Activated T-helper 1 cell treated with anti-CD3 and anti-CD28 coated beads, Interleukin-12 subunit alpha, Interleukin-12 subunit beta, Interleukin-2, Interleukin-4 antibody, amounts not matched to agents 30 ng/mL and 10 ng/mL and 1 ng/mL, durations not matched to agents 14 hours and 24 hours and 36 hours (primary cell): ENCODE measurements at regions of chr5 and their contacts with region 1.

Region 1: DNA sequence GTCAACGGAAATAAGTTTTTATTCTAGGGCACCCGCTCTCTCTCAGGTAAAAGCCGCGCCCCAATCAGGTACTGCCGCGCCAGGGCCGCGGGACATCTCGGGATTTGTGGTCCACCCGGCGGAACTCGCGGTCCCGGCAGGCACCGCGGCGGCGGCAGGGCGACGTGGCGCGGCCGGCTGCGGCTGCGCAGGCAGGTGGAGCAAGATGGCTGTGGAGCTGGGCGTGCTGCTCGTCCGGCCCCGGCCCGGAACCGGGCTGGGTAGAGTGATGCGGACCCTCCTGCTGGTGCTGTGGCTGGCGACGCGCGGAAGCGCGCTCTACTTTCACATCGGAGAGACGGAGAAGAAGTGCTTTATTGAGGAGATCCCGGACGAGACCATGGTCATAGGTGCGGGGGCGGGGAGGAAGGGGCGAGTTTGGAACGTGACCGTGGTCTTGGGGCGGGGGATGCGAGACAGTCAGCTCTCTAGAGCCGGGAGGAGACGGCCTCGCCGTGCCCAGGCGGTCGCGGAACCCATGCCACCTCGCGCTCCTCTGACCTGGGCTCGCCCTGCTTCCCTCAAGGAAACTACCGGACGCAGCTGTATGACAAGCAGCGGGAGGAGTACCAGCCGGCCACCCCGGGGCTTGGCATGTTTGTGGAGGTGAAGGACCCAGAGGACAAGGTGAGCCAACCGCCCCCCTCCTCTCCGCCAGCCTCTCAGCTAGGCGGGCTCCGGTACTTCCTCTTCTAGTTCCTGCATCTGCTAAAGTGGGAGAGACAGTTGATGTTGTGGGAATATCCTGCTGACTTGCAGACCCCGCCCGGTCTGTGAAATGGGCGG is at the start of gene TMED9:
- DNase-seq: peak; percentile 90
- H3K4me3 Mint-ChIP-seq: peak within 1 kb of the TSS; percentile 99
- H3K27ac Mint-ChIP-seq: peak within 1 kb of the TSS; percentile 100
- H3K4me1 Mint-ChIP-seq: peaks cover 29% of the 10 kb centered on the region
- H3K27me3 Mint-ChIP-seq: peaks cover 20% of the 10 kb centered on the region
- total RNA-seq, gene TMED9: 174 and 175 TPM in 2 replicates

Region 2: DNA sequence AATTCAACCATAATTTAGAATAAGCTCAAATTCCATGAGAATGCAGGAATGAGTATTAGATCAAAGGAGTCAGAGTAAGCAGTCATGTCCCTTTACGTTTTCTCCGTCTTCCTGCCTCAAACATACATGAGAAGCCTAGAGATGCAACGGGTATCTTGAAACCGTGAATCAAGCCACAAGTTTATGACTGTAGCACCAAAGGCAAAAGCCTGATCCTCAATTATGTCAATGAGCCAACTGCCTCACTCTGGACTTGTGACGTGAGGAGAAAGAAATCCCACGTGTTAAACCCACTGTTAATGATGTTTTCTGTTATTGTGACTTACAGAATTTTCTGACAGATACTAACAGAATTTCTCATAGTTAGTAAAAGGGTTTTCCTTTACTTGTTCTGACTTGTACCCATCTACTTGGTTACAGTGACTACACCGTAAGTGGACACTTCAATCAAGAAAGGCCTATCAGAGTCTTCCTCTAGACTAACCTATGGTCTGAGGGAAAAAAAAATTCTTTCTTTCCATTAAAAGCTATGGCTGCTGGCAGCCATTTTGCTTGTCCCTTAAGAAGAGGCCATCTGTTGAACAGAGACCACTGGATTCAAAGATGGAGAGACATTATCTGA is 657.8 kb before region 1 on chr5:
- intact Hi-C with region 1: no loop called
- DNase-seq: no peak
- H3K4me3 Mint-ChIP-seq: no peak overlapping the region
- H3K27ac Mint-ChIP-seq: no peak overlapping the region
- H3K4me1 Mint-ChIP-seq: peaks cover 9% of the 10 kb centered on the region
- H3K27me3 Mint-ChIP-seq: no peaks in the 10 kb centered on the region

Region 3: GRCh38 chr5:177133091-177133852 is 458.9 kb before region 1 on chr5 and contains the start of gene NSD1:
- intact Hi-C with region 1: loop called (anchors 5 kb)
- DNase-seq: peak; percentile 90
- H3K4me3 Mint-ChIP-seq: peak within 1 kb of the TSS; percentile 93
- H3K27ac Mint-ChIP-seq: peak within 1 kb of the TSS; percentile 86
- H3K4me1 Mint-ChIP-seq: peaks cover 48% of the 10 kb centered on the region
- H3K27me3 Mint-ChIP-seq: no peaks in the 10 kb centered on the region
- total RNA-seq, gene NSD1: 108 and 112 TPM in 2 replicates

Region 4: GRCh38 chr5:177403792-177404640 is 188.2 kb before region 1 on chr5:
- intact Hi-C with region 1: loop called (anchors 2 kb)
- DNase-seq: peak; percentile 75
- H3K4me3 Mint-ChIP-seq: peak overlapping the region; percentile 84
- H3K27ac Mint-ChIP-seq: no peak overlapping the region
- H3K4me1 Mint-ChIP-seq: peaks cover 17% of the 10 kb centered on the region
- H3K27me3 Mint-ChIP-seq: peaks cover 34% of the 10 kb centered on the region

Region 5: DNA sequence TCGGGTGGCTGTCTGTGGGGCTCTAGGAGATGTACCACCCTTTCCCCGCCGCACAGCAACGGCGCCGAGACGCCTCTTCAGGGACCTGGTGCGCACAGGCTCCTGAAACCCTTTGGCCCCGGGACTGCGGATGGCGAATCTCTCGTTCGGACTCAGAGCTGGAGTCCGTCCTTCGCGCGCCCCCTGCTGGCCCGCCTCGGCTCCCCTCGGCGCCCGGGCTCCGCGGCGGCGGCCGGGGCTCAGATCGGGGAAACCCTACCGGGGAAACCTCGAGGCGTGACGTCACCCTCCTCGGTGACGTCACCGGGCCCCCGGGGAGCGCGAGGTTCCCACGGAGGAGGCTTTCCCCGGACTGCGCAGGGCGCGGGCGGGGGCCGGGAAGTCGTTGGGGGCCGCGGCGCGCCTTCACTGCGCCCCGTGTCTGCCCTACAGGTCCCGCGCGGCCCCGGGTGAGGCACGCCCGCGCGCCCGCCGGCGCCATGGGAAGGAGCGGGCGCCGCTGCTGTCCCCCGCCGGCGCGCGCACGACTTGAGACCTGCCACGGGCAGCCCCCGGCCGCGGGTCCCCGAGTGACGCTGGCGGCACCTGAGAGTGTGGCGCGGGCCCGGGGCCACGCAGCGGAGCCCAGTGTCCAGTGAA is 137.7 kb before region 1 on chr5:
- intact Hi-C with region 1: loop called (anchors 5 kb)
- DNase-seq: peak; percentile 89
- H3K4me3 Mint-ChIP-seq: no peak overlapping the region
- H3K27ac Mint-ChIP-seq: peak overlapping the region; percentile 40
- H3K4me1 Mint-ChIP-seq: peaks cover 11% of the 10 kb centered on the region
- H3K27me3 Mint-ChIP-seq: peaks cover 18% of the 10 kb centered on the region

Region 6: GRCh38 chr5:177554474-177555111 is 37.6 kb before region 1 on chr5 and contains the start of gene FAM193B:
- intact Hi-C with region 1: loop called (anchors 1 kb)
- DNase-seq: peak; percentile 94
- H3K4me3 Mint-ChIP-seq: peak within 1 kb of the TSS; percentile 88
- H3K27ac Mint-ChIP-seq: peak within 1 kb of the TSS; percentile 85
- H3K4me1 Mint-ChIP-seq: peaks cover 37% of the 10 kb centered on the region
- H3K27me3 Mint-ChIP-seq: no peaks in the 10 kb centered on the region
- total RNA-seq, gene FAM193B: 70.9 and 79.4 TPM in 2 replicates

Region 7: GRCh38 chr5:178196986-178197385 is 604.8 kb after region 1 on chr5:
- intact Hi-C with region 1: no loop called
- DNase-seq: no peak
- H3K4me3 Mint-ChIP-seq: no peak overlapping the region
- H3K27ac Mint-ChIP-seq: no peak overlapping the region
- H3K4me1 Mint-ChIP-seq: peaks cover 20% of the 10 kb centered on the region
- H3K27me3 Mint-ChIP-seq: peaks cover 31% of the 10 kb centered on the region

Region 8: DNA sequence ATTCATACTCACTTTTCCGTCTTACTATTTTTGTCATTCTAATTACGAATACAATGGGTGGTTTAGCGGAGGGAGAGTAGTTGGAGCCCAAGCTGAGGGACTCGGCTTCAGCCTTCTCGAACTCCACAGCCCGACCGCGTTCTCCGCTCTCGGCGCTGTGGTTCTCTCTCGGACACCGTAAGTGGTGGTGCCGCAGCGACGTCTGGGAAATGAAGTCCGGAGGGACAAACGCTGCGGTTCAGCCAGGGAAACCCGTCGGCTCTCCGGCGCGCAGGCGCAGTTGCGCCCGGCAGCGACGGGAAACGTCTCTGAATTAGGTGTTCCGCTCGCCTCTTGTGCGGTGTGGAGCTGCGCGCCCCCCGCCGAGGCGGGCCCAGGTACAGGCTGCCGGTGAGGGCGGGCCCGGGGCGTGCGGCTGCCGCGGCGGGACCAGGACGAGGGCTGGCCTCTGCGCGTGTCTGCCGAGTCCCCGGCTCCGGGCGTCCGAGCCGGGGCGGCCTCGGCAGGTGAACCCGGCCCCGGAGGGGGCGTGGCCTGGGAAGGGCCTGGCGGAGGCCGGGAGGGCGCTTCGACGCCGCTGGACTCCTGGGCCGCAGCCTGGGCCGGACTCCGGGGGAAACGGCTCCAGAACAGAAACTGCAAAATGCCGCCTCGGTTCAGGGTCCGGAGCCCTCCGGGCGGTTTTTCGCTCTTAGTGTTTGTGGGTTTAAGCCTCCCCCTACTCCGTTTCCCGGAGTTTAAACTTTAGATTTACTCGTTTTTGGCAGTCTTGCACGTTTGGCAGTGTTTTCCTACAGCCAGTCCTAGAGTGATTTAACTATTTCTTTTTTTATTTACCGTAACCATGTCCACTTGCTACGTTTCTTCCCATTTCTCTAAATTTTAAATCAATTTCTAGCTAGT is 1431.6 kb after region 1 on chr5 and contains the start of gene ZNF879:
- intact Hi-C with region 1: loop called (anchors 10 kb)
- DNase-seq: peak; percentile 89
- H3K4me3 Mint-ChIP-seq: peak within 1 kb of the TSS; percentile 95
- H3K27ac Mint-ChIP-seq: peak within 1 kb of the TSS; percentile 78
- H3K4me1 Mint-ChIP-seq: peaks cover 10% of the 10 kb centered on the region
- H3K27me3 Mint-ChIP-seq: no peaks in the 10 kb centered on the region
- total RNA-seq, gene ZNF879: 2.2 and 4.2 TPM in 2 replicates